ENCODE measurements at regions of chr21 and their contacts with region 1.

Region 1: DNA sequence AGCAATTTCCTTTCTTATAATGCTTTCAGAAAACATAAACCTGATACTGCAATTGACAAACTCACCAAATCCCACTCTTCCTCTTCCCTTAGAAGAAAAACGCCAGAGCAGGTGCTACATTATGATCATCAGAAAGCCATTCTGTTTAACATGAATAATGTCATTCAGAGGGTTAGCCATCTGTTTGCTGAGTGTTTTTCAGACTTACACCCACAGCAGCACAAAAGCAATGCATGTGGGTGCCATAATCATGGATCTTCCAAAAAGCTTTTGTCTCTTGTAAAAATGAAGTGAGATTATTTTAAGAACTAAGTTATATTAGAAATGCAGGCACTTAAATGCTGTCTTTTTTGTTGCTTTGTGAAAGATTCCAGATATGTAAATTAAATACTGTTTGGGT is 204.6 kb upstream of the TMPRSS15 start:
- DNase-seq: no peak
- ATAC-seq: no peak
- H3K4me3 Mint-ChIP-seq: no peak overlapping the region
- H3K27ac Mint-ChIP-seq: no peak overlapping the region
- H3K4me1 Mint-ChIP-seq: no peaks in the 10 kb centered on the region
- H3K27me3 Mint-ChIP-seq: no peaks in the 10 kb centered on the region

Region 2: DNA sequence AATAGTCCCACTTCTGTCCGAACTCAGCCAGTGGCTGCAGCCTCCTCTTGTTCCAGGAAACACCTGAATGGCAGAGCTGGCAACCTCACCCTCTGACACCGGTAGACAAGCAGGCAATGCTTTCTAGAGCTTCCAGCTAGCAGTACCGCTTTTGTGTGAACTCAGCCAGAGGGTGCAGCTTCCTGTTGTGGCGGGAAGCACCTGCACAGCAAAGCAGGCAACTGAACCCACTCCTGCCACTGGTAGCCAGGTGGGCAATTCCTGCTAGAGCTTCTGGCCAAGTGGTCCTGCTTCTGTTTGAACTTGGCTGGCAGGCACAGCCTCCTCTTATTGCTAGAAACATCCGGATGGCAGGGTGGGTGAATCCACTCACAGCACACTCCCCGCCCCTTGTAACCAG is 164.5 kb before region 1 on chr21:
- CTCF ChIA-PET with region 1: no interaction called
- POLR2A ChIA-PET with region 1: no interaction called
- intact Hi-C with region 1: no loop called
- DNase-seq: no peak
- ATAC-seq: no peak
- H3K4me3 Mint-ChIP-seq: no peak overlapping the region
- H3K27ac Mint-ChIP-seq: no peak overlapping the region
- H3K4me1 Mint-ChIP-seq: peaks cover 2% of the 10 kb centered on the region
- H3K27me3 Mint-ChIP-seq: no peaks in the 10 kb centered on the region

Region 3: GRCh38 chr21:18661842-18662241 is 53.6 kb after region 1 on chr21:
- CTCF ChIA-PET with region 1: no interaction called
- POLR2A ChIA-PET with region 1: no interaction called
- intact Hi-C with region 1: loop called in 1 of 2 experiments (anchors 10 kb)
- DNase-seq: no peak
- ATAC-seq: no peak
- H3K4me3 Mint-ChIP-seq: no peak overlapping the region
- H3K27ac Mint-ChIP-seq: no peak overlapping the region
- H3K4me1 Mint-ChIP-seq: no peaks in the 10 kb centered on the region
- H3K27me3 Mint-ChIP-seq: no peaks in the 10 kb centered on the region

Region 4: GRCh38 chr21:19322360-19322759 is 714.1 kb after region 1 on chr21:
- CTCF ChIA-PET with region 1: no interaction called
- POLR2A ChIA-PET with region 1: no interaction called
- intact Hi-C with region 1: no loop called
- DNase-seq: no peak
- ATAC-seq: no peak
- H3K4me3 Mint-ChIP-seq: no peak overlapping the region
- H3K27ac Mint-ChIP-seq: no peak overlapping the region
- H3K4me1 Mint-ChIP-seq: no peaks in the 10 kb centered on the region
- H3K27me3 Mint-ChIP-seq: no peaks in the 10 kb centered on the region